MCF 10A (cell line): ENCODE measurements at regions of chrX and their contacts with region 1.

Region 1: GRCh38 chrX:33336783-33337182 is 125.4 kb upstream of the DMD start:
- DNase-seq: peak; percentile 45
- H3K4me3 Mint-ChIP-seq: no peak overlapping the region
- H3K27ac Mint-ChIP-seq: no peak overlapping the region
- H3K4me1 Mint-ChIP-seq: peaks cover 11% of the 10 kb centered on the region
- H3K27me3 Mint-ChIP-seq: peaks cover 39% of the 10 kb centered on the region
- CTCF ChIP-seq: peak; percentile 50

Region 2: GRCh38 chrX:32408389-32408788 is 928.4 kb before region 1 on chrX:
- CTCF ChIA-PET with region 1: no interaction called
- POLR2A ChIA-PET with region 1: no interaction called
- intact Hi-C with region 1: loop called (anchors 2 kb)
- DNase-seq: peak; percentile 35
- H3K4me3 Mint-ChIP-seq: no peak overlapping the region
- H3K27ac Mint-ChIP-seq: no peak overlapping the region
- H3K4me1 Mint-ChIP-seq: no peaks in the 10 kb centered on the region
- H3K27me3 Mint-ChIP-seq: peaks cover 23% of the 10 kb centered on the region
- CTCF ChIP-seq: peak; percentile 45

Region 3: DNA sequence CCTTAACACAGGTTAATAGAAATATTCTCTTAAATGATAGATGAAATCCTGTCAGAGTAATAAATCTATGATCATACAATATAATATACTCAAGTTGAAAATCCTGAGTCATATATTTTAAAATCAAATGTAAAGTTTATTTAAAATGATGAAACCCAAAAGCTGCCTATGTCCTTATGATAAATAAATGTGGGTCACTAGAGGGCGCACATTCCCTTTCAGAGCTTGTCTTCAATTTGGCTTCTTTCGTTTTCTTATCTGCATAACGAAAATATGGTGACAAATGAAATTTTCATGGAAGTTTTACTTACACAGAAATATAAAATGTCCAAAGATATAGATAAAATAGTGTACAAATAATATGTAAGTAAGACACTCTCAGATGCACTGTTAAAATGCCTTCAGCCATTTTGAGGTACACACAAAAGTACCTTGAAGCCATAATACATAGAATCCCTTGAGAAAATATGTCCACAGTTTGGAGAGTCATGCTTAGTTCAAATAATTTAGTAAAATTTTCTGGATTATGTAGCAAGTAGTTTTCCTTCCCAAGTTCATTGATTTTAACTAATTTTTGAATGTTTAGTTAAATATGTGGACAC is 805.9 kb before region 1 on chrX:
- CTCF ChIA-PET with region 1: interaction called, 4 read pairs
- POLR2A ChIA-PET with region 1: no interaction called
- intact Hi-C with region 1: loop called (anchors 1 kb)
- DNase-seq: peak; percentile 66
- H3K4me3 Mint-ChIP-seq: peak overlapping the region; percentile 25
- H3K27ac Mint-ChIP-seq: no peak overlapping the region
- H3K4me1 Mint-ChIP-seq: no peaks in the 10 kb centered on the region
- H3K27me3 Mint-ChIP-seq: peaks cover 14% of the 10 kb centered on the region
- CTCF ChIP-seq: peak; percentile 52

Region 4: GRCh38 chrX:32778965-32779364 is 557.8 kb before region 1 on chrX:
- CTCF ChIA-PET with region 1: interaction called, 7 read pairs
- POLR2A ChIA-PET with region 1: no interaction called
- intact Hi-C with region 1: loop called (anchors 2 kb)
- DNase-seq: no peak
- H3K4me3 Mint-ChIP-seq: no peak overlapping the region
- H3K27ac Mint-ChIP-seq: no peak overlapping the region
- H3K4me1 Mint-ChIP-seq: no peaks in the 10 kb centered on the region
- H3K27me3 Mint-ChIP-seq: peaks cover 2% of the 10 kb centered on the region
- CTCF ChIP-seq: no peak

Region 5: DNA sequence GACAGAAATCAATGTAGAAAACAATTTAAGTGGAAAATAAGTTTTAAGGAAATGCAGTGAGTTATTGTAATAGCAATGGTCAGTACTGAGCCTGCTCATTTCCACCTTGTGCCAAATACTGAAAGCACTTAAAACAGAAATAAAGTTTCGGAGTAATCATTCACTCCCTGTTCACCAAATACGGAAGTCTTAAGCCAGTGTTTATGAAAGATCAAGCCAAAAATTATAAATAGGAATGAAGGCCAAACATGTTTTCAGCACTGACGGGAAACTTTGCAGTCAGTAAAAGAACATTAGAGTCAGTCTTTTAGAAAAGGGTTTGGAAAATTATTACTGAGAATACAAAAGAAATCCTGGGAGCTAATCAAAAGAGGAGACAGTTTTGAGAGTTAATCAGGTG is 304.1 kb before region 1 on chrX:
- CTCF ChIA-PET with region 1: no interaction called
- POLR2A ChIA-PET with region 1: no interaction called
- intact Hi-C with region 1: loop called (anchors 10 kb)
- DNase-seq: no peak
- H3K4me3 Mint-ChIP-seq: no peak overlapping the region
- H3K27ac Mint-ChIP-seq: no peak overlapping the region
- H3K4me1 Mint-ChIP-seq: no peaks in the 10 kb centered on the region
- H3K27me3 Mint-ChIP-seq: peaks cover 29% of the 10 kb centered on the region
- CTCF ChIP-seq: no peak